ENCODE measurements at regions of chr5 and their contacts with region 1.

Region 1: GRCh38 chr5:96187309-96188027 is 225.8 kb upstream of the ELL2 start:
- DNase-seq: peak; percentile 93
- ATAC-seq: peak; percentile 98
- H3K4me3 ChIP-seq: no peak overlapping the region; a peak in 1 of 6 replicates
- H3K27ac ChIP-seq: peak overlapping the region; percentile 61
- H3K4me1 ChIP-seq: peaks cover 47% of the 10 kb centered on the region
- H3K27me3 ChIP-seq: no peaks in the 10 kb centered on the region
- CTCF ChIP-seq: no peak
- EP300 ChIP-seq: peak; percentile 13 to 81; a peak in 2 of 4 replicates
- POLR2A ChIP-seq: no peak
- RAD21 ChIP-seq: no peak; the same call in 1 of the 2 replicates

Region 2: GRCh38 chr5:96113170-96113939 is 74.1 kb before region 1 on chr5:
- CTCF ChIA-PET with region 1: no interaction called
- POLR2A ChIA-PET with region 1: interaction called, 12 read pairs
- in situ Hi-C with region 1: no loop called
- intact Hi-C with region 1: loop called (anchors 2 kb)
- DNase-seq: no peak
- ATAC-seq: no peak
- H3K4me3 ChIP-seq: no peak overlapping the region
- H3K27ac ChIP-seq: no peak overlapping the region
- H3K4me1 ChIP-seq: peaks cover 89% of the 10 kb centered on the region
- H3K27me3 ChIP-seq: no peaks in the 10 kb centered on the region
- CTCF ChIP-seq: no peak
- EP300 ChIP-seq: no peak
- POLR2A ChIP-seq: no peak
- RAD21 ChIP-seq: no peak

Region 3: GRCh38 chr5:96247097-96247701 is 59.7 kb after region 1 on chr5:
- CTCF ChIA-PET with region 1: no interaction called
- POLR2A ChIA-PET with region 1: interaction called, 5 read pairs
- in situ Hi-C with region 1: no loop called
- intact Hi-C with region 1: loop called (anchors 5 kb)
- DNase-seq: no peak
- ATAC-seq: no peak
- H3K4me3 ChIP-seq: no peak overlapping the region
- H3K27ac ChIP-seq: no peak overlapping the region
- H3K4me1 ChIP-seq: peaks cover 77% of the 10 kb centered on the region
- H3K27me3 ChIP-seq: no peaks in the 10 kb centered on the region
- CTCF ChIP-seq: no peak
- EP300 ChIP-seq: no peak
- POLR2A ChIP-seq: no peak
- RAD21 ChIP-seq: no peak

Measured in HepG2 (cell line).